GM18951 (cell line): ENCODE measurements at regions of chr7 and their contacts with region 1.

Region 1: GRCh38 chr7:867672-868486 is 8.5 kb upstream of the GET4 start:
- POLR2A ChIP-seq: no peak

Region 2: GRCh38 chr7:318878-319661 is 548.8 kb before region 1 on chr7:
- in situ Hi-C with region 1: loop called (anchors 10 kb)
- POLR2A ChIP-seq: no peak

Region 3: GRCh38 chr7:503575-504111 is 364.2 kb before region 1 on chr7:
- in situ Hi-C with region 1: no loop called
- POLR2A ChIP-seq: no peak

Region 4: GRCh38 chr7:786472-787255 is 81.2 kb before region 1 on chr7:
- in situ Hi-C with region 1: loop called (anchors 10 kb)
- POLR2A ChIP-seq: no peak